ENCODE measurements at regions of chr18 and their contacts with region 1.

Region 1: DNA sequence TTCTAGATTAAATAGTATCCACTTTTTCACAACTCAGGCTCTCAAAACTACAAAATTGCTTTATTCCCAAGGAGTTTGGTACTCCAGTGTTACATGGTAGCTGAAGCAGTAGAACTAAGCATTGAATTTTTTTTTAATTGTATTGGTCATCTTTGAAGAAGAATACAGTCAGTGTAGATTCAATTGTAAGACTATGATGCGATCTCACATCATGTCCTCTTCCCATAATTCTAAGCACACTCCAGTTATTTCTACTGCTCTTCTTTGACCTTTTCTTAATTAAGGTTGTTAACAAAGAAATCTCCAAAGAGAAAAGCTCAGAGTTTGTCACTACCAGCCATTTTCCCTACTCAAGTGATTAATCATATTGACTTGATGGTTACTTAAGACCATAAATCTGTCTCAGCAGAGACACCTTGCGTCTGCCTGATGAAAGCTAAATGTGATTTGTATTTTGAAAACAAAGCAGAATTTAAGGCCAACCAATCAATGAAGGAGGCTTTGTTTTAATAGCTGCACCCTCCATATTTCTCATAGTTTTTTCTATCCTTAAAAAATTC is 130.2 kb downstream of the DTNA start:
- DNase-seq: no peak
- H3K4me3 ChIP-seq: no peak overlapping the region
- CTCF ChIP-seq: no peak

Region 2: GRCh38 chr18:34867520-34867919 is 27.2 kb after region 1 on chr18:
- CTCF ChIA-PET with region 1: interaction called, 11 read pairs
- POLR2A ChIA-PET with region 1: no interaction called
- DNase-seq: no peak
- H3K4me3 ChIP-seq: no peak overlapping the region
- CTCF ChIP-seq: peak; percentile 27

Region 3: DNA sequence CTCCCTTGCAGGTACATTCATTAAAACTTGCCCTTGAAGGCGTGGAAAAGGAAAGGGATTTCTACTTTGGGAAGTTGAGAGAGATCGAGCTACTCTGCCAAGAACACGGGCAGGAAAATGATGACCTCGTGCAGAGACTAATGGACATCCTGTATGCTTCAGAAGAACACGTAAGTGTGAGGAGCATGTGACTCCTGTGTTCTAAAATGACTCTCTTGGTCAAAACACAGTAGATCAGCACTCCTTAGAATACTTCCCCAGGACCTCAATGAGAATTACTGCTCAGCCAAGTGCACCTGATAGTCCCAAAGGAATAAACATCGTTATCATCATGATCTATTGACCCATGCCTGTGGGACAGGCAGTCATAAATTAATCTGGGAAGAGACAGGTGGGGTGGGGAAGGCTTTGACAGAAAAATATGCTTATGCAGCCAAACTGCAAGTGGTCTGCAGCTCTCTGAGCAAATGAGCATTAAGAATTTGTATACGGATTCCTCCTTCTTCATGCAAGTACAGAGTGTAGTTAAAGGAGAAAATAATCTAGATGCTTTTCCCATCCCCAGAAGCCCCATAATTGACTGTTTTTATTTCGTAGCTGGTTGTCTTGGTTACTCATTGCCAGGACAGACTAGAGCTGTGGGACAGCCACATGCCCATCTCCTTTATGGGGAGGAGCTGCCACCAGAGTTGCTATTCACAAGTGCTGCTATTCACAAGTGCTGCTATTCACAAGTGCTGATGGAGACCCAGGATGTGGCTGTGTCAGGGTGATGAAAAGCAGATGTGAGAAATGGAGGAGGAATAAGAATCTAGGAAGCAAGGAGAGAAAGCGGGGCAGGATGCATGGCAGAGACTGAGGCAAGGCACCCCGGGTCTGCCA is 291.9 kb after region 1 on chr18:
- CTCF ChIA-PET with region 1: no interaction called
- POLR2A ChIA-PET with region 1: no interaction called
- DNase-seq: no peak
- H3K4me3 ChIP-seq: no peak overlapping the region
- CTCF ChIP-seq: no peak